Calu3 (cell line): ENCODE measurements at regions of chr16 and their contacts with region 1.

Region 1: GRCh38 chr16:67993189-67994039 is 5.9 kb downstream of the DPEP2 start:
- DNase-seq: peak; percentile 85
- H3K4me3 Mint-ChIP-seq: peak overlapping the region; percentile 51
- H3K27ac Mint-ChIP-seq: peak overlapping the region; percentile 42
- H3K4me1 Mint-ChIP-seq: peaks cover 6% of the 10 kb centered on the region
- H3K27me3 Mint-ChIP-seq: peaks cover 23% of the 10 kb centered on the region
- CTCF ChIP-seq: peak; percentile 99

Region 2: GRCh38 chr16:67942200-67942509 is 51.3 kb before region 1 on chr16:
- CTCF ChIA-PET with region 1: interaction called, 12 read pairs
- intact Hi-C with region 1: no loop called
- DNase-seq: peak; percentile 59
- H3K4me3 Mint-ChIP-seq: no peak overlapping the region
- H3K27ac Mint-ChIP-seq: peak overlapping the region; percentile 55
- H3K4me1 Mint-ChIP-seq: peaks cover 6% of the 10 kb centered on the region
- H3K27me3 Mint-ChIP-seq: no peaks in the 10 kb centered on the region
- CTCF ChIP-seq: peak; percentile 76

Region 3: GRCh38 chr16:68186877-68187276 is 193.5 kb after region 1 on chr16:
- CTCF ChIA-PET with region 1: no interaction called
- intact Hi-C with region 1: no loop called
- DNase-seq: no peak
- H3K4me3 Mint-ChIP-seq: no peak overlapping the region
- H3K27ac Mint-ChIP-seq: no peak overlapping the region
- H3K4me1 Mint-ChIP-seq: no peaks in the 10 kb centered on the region
- H3K27me3 Mint-ChIP-seq: no peaks in the 10 kb centered on the region
- CTCF ChIP-seq: no peak

Region 4: GRCh38 chr16:68229431-68230198 is 236.2 kb after region 1 on chr16:
- CTCF ChIA-PET with region 1: no interaction called
- intact Hi-C with region 1: loop called (anchors 10 kb)
- DNase-seq: peak; percentile 63
- H3K4me3 Mint-ChIP-seq: no peak overlapping the region
- H3K27ac Mint-ChIP-seq: no peak overlapping the region
- H3K4me1 Mint-ChIP-seq: peaks cover 22% of the 10 kb centered on the region
- H3K27me3 Mint-ChIP-seq: no peaks in the 10 kb centered on the region
- CTCF ChIP-seq: peak; percentile 90